GM12878 (cell line): ENCODE measurements at regions of chr2 and their contacts with region 1.

Region 1: GRCh38 chr2:46601328-46601963 is 122.1 kb downstream of the TMEM247 start:
- DNase-seq: no peak
- ATAC-seq: 0 out of 3 replicates have a peak, but pooled peaks have one; percentile 21
- H3K4me3 ChIP-seq: no peak overlapping the region
- H3K27ac ChIP-seq: no peak overlapping the region
- H3K4me1 ChIP-seq: no peaks in the 10 kb centered on the region
- H3K27me3 ChIP-seq: no peaks in the 10 kb centered on the region
- CTCF ChIP-seq: peak; percentile 22 to 50 (median 31); a peak in 3 of 6 replicates
- EP300 ChIP-seq: no peak
- POLR2A ChIP-seq: no peak
- RAD21 ChIP-seq: 0 out of 2 replicates have a peak, but pooled peaks have one; percentile 38

Region 2: GRCh38 chr2:46589358-46589757 is 12.1 kb before region 1 on chr2:
- CTCF ChIA-PET with region 1: interaction called, 15 read pairs
- POLR2A ChIA-PET with region 1: no interaction called
- RAD21 ChIA-PET with region 1: interaction called, 3 read pairs
- SMC1A ChIA-PET with region 1: interaction called, 7 read pairs
- in situ Hi-C with region 1: no loop called
- intact Hi-C with region 1: no loop called
- DNase-seq: no peak
- ATAC-seq: no peak
- H3K4me3 ChIP-seq: no peak overlapping the region
- H3K27ac ChIP-seq: no peak overlapping the region
- H3K4me1 ChIP-seq: no peaks in the 10 kb centered on the region
- H3K27me3 ChIP-seq: no peaks in the 10 kb centered on the region
- CTCF ChIP-seq: no peak
- EP300 ChIP-seq: no peak
- POLR2A ChIP-seq: no peak
- RAD21 ChIP-seq: no peak

Region 3: DNA sequence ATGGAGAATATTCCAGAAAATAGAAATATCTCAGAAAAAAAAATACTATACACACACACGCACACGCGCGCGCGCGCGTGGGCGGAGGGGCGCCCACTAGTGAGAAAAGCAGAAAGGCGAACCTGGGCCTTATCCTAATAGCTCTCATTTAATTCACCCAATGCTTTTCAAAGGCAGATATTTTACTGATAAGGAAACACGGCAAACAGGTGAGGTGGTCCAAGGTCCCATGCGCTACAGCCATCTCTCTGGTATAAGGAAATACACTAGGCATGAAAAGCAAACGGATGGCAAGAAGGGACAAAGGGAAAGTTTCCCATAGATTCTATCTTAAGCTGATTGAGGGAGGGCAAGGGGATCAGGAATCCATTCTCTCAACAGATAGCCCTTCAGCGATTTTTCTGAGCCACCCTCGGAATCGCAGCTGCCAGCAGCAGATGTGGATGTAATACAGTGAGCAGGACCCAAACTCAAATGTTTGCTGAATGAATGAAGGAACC is 14.6 kb after region 1 on chr2:
- CTCF ChIA-PET with region 1: interaction called, 14 read pairs
- POLR2A ChIA-PET with region 1: no interaction called
- RAD21 ChIA-PET with region 1: interaction called, 7 read pairs
- SMC1A ChIA-PET with region 1: interaction called, 12 read pairs
- in situ Hi-C with region 1: no loop called
- intact Hi-C with region 1: no loop called
- DNase-seq: no peak
- ATAC-seq: 0 out of 3 replicates have a peak, but pooled peaks have one; percentile 1
- H3K4me3 ChIP-seq: peak overlapping the region; percentile 86
- H3K27ac ChIP-seq: peak overlapping the region; percentile 77
- H3K4me1 ChIP-seq: peaks cover 14% of the 10 kb centered on the region
- H3K27me3 ChIP-seq: no peaks in the 10 kb centered on the region
- CTCF ChIP-seq: peak; percentile 14 to 31 (median 26); a peak in 4 of 6 replicates
- EP300 ChIP-seq: 0 out of 4 replicates have a peak, but pooled peaks of 1 of the 2 experiments have one; percentile 26
- POLR2A ChIP-seq: no peak
- RAD21 ChIP-seq: no peak